Dendritic cell treated with granulocyte-macrophage colony-stimulating factor and Interleukin-4, amounts not matched to agents 40 ng/mL and 50 ng/mL, for 4 days (primary cell): ENCODE measurements at regions of chr1 and their contacts with region 1.

Region 1: DNA sequence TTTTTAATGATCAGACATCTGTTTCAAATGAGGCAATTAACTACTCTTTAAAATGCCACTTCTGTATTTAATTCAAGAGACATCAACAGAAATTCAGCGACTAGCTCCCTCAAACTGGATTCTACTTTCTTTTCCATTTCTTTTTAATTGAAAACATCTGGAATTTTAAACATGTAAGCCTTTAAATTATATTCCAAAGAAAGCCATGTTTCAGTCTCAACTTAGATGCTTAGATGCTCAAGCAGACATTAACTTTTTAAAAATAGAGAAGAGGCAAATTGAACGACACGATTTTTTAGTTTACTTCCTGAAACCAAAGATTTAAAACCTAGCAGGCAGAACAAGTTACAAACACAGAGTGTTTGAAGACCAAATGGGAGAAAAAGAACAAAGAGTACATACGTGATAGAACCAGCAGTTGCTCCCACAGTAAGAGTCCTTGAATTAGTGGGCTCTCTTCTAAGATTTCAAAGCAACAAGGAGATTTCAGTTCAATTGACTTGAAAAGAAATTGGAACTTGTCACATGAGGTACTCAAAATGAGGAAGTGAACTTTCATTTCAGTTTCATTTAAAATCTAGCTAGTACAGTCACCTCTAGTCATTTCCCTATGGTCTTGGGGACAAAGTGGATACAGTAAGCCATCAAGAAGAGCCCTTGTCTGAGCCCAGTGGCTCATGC is at the start of gene CTSS:
- H3K4me3 Mint-ChIP-seq: peak within 1 kb of the TSS; percentile 94
- H3K27ac Mint-ChIP-seq: peak within 1 kb of the TSS; percentile 98
- H3K4me1 Mint-ChIP-seq: peaks cover 42% of the 10 kb centered on the region
- H3K27me3 Mint-ChIP-seq: no peaks in the 10 kb centered on the region

Region 2: DNA sequence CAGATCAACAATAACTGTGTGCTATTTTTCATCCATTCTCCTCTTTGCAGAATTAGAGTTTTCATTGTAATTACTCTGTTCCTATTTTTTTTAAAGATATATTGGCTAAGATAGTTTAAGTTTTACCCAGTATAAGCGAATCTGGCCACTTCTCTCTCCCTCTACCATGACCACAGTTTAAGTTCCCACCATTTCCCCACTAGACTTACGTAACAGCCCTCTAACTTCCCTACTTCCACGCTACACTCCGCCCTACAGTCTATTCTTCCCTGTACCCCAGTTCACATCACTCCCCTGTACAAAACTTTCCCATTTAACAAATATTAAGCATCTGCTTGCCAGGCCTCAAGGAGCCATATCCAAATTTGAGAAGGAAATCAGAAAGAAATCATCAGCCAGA is 26.1 kb after region 1 on chr1:
- intact Hi-C with region 1: loop called (anchors 2 kb)
- H3K4me3 Mint-ChIP-seq: peak overlapping the region; percentile 45
- H3K27ac Mint-ChIP-seq: peak overlapping the region; percentile 80
- H3K4me1 Mint-ChIP-seq: peaks cover 78% of the 10 kb centered on the region
- H3K27me3 Mint-ChIP-seq: no peaks in the 10 kb centered on the region

Region 3: DNA sequence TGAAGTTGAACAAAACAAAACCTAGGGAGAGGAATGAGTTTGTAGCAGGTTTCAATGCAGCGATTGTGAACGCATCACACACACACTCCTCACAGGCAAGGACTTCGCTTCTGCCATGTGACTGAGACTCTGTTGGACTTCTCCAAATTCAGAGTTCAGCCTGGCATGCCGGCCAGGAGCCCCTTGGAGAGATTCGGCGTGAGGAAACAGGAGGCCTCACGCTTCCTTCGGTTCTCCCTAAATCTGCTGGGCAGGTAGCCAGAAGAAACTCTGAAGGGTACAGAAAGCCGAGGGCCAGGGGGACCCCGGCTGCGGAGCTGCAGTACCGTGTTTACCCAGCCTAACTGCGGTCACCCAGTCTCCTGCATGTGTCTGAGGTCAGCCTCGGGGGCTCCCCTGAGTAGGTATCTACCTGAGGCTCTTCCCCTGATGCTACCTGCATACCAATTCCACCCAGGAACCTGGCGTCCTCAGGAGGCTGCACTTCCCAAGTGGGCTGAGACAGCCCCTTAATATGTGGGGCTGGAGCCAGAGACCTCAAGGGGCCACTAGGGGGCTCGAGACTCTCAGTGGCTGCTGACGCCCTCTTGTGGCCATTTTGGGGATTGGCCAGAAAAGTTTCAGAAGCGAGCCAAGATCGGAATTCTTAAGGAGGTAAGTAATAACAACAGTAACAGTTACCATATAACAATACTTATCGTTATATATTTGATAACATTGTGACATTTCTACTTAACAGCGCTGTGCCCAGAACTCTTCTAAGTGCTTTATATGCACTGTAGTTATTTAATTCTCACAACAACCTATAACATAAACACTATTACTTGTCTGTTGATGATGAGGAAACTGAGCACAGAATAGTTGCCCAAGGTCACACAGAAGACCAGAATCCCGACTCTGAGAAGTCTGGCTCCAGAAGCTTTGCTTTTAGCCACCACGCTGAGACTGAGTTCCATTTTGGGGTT is 213.9 kb after region 1 on chr1:
- intact Hi-C with region 1: loop called (anchors 10 kb)
- H3K4me3 Mint-ChIP-seq: peak overlapping the region; percentile 69
- H3K27ac Mint-ChIP-seq: peak overlapping the region; percentile 97
- H3K4me1 Mint-ChIP-seq: peaks cover 49% of the 10 kb centered on the region
- H3K27me3 Mint-ChIP-seq: no peaks in the 10 kb centered on the region

Region 4: DNA sequence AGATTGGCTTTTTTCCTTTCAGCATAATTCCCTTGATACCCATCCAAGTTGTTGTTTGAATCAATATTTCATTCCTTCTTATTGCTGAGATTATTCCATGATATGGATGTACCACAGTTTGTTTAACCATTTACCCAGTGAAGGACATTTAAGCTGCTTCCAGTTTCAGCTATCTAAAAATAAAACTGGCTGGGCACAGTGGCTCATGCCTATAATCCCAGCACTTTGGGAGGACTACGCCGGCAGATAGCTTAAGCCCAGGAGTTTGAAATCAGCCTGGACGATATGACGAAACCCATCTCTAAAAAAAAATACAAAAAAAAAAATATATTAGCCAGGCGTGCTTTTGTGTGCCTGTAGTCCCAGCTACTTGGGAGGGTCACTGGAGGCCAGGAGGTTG is 348.4 kb after region 1 on chr1:
- intact Hi-C with region 1: no loop called
- H3K4me3 Mint-ChIP-seq: no peak overlapping the region
- H3K27ac Mint-ChIP-seq: no peak overlapping the region
- H3K4me1 Mint-ChIP-seq: no peaks in the 10 kb centered on the region
- H3K27me3 Mint-ChIP-seq: no peaks in the 10 kb centered on the region

Region 5: DNA sequence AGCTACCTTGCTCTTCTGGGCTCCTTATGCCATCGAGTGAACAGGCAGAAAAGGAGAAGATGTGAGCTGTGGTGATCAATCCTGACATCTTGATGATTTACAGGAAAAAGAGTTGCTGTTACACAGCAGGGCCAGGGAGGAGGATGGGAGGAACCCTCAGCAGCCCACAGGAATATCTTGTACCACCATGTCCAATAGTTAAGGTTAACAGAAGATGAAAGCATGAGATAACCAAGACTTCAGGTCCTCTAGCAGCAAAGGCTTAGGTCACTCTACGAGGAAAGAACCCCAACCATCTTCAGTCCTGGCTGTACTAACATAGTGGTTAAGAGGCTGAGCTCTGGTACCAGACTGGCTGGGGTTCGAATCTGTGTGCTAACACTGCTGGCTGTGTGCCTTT is 619.1 kb after region 1 on chr1:
- intact Hi-C with region 1: no loop called
- H3K4me3 Mint-ChIP-seq: no peak overlapping the region
- H3K27ac Mint-ChIP-seq: no peak overlapping the region
- H3K4me1 Mint-ChIP-seq: no peaks in the 10 kb centered on the region
- H3K27me3 Mint-ChIP-seq: no peaks in the 10 kb centered on the region